HEK293 (cell line): ENCODE measurements at regions of chr5 and their contacts with region 1.

Region 1: GRCh38 chr5:176660860-176661641 is 13.8 kb downstream of the TSPAN17 start:
- H3K4me3 ChIP-seq: no peak overlapping the region
- H3K27ac ChIP-seq: no peak overlapping the region
- H3K4me1 ChIP-seq: no peaks in the 10 kb centered on the region
- CTCF ChIP-seq: peak; percentile 97

Region 2: DNA sequence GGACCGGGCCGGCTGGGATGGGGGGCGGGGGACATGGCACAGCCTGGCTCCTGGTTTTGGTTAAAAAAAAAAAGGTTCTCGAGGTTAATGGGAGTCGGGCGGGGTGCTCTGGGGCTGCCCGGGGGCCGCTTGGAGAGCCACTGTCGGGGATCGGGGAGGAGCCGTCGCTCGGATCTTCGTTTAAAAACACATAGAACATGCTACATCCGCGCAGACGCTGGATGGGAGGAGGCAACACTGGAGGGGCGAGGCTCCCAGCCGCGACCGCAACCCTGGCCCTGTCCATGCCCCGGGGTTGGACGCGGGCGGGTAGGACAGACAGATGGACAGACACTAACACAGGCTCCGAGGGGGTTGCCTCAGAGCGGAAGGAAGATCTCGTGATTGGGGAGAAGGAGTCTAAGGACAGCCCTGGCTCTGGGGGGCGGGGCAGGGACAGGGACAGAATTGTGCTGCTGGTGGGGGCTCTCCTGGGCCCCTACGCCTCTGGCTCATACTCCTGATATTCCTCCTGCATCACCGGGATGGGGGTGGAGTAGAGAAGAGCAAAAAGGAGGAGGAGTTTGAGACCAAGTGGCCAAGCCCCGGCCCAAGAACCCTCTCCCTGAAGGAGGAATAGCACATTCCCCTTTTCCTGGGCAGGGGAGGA is 40.6 kb before region 1 on chr5:
- CTCF ChIA-PET with region 1: interaction called, 10 read pairs
- POLR2A ChIA-PET with region 1: no interaction called
- H3K4me3 ChIP-seq: no peak overlapping the region
- H3K27ac ChIP-seq: no peak overlapping the region
- H3K4me1 ChIP-seq: no peaks in the 10 kb centered on the region
- CTCF ChIP-seq: no peak

Region 3: DNA sequence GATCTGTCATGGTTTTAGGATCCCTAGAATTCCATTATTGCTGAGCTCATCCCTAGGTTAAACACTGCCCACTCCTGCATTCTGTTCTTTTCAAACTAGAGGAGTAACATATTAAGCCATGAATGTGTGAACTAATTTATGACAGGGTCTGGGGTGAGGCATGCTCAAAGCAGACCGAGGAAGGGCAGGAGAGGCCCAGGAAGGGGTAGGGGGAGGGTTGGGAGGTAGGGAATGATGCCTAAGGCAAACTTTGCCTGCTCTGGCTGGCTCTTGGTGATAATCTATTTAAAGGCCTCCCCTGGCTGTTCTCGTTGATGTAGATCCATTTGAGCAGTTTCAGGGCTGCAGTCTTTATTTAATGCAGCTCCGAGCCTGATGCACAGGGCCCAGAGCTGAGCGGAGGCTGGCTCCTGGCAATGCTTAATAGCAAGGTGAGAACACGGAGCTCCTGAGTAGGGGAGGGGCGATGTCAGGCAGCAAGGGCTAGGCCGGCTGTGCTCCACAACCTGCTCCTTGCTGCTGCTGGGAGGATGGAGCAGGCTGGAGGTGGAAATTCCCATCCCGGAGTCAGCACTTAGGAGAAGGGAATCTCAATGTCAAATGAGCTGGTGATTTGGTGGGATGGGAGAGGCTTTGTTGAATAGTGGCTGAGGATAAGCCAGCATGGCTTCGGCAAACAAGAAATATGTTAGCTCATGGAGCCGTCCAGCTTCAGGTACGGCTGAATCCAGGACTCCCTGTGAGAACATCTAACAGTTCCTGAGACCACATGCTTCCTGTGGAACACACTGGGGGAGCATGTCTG is 76.1 kb after region 1 on chr5:
- CTCF ChIA-PET with region 1: interaction called, 13 read pairs
- POLR2A ChIA-PET with region 1: no interaction called
- H3K4me3 ChIP-seq: no peak overlapping the region
- H3K27ac ChIP-seq: no peak overlapping the region
- H3K4me1 ChIP-seq: no peaks in the 10 kb centered on the region
- CTCF ChIP-seq: no peak

Region 4: GRCh38 chr5:176812269-176813259 is 151.5 kb after region 1 on chr5:
- CTCF ChIA-PET with region 1: interaction called, 25 read pairs
- POLR2A ChIA-PET with region 1: interaction called, 3 read pairs
- H3K4me3 ChIP-seq: no peak overlapping the region
- H3K27ac ChIP-seq: no peak overlapping the region
- H3K4me1 ChIP-seq: no peaks in the 10 kb centered on the region
- CTCF ChIP-seq: peak; percentile 89

Region 5: GRCh38 chr5:176952531-176953193 is 291.6 kb after region 1 on chr5:
- CTCF ChIA-PET with region 1: interaction called, 39 read pairs
- POLR2A ChIA-PET with region 1: no interaction called
- H3K4me3 ChIP-seq: no peak overlapping the region
- H3K27ac ChIP-seq: no peak overlapping the region
- H3K4me1 ChIP-seq: peaks cover 5% of the 10 kb centered on the region; the same call in 1 of the 2 replicates
- CTCF ChIP-seq: no peak

Region 6: DNA sequence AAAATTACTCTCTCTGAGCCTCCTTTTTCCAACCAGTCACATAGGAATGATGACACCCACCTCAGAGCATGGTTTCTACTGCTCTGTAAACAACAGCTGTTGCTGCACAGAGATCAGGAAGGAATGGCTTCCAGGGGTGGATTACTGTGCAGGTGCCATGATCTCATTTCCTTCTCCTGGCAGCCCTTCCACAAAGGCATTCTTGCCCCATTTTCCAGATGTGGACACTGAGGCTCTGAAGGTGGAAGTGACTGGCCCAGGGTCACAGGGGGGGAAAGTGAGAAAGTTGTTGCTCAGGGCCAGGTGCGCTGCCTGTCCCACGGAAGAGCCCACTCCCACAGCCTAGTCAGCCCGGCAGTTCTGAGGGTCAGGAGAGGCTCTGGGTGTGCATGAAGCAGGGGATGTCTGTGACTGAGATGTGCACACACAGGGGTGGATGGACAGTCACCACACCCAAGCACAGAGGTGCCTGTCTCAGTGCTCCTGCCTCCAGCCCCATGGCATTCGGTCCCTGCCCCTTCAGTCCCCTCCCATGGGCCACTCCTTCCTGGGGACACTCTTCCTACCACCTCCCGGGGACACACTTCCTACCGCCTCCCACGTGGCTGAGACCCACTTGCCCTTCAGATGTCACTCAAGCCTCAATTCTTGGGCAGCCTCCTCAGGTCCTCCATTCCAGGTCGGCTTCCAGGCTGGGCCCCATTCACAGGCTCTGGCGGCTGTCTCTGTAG is 442.6 kb after region 1 on chr5:
- CTCF ChIA-PET with region 1: interaction called, 26 read pairs
- POLR2A ChIA-PET with region 1: no interaction called
- H3K4me3 ChIP-seq: no peak overlapping the region
- H3K27ac ChIP-seq: no peak overlapping the region
- H3K4me1 ChIP-seq: no peaks in the 10 kb centered on the region
- CTCF ChIP-seq: no peak